ENCODE measurements at regions of chr18 and their contacts with region 1.

Region 1: GRCh38 chr18:57561728-57562423 is 24.6 kb downstream of the FECH start:
- H3K4me3 ChIP-seq: no peak overlapping the region
- H3K27ac ChIP-seq: no peak overlapping the region
- H3K4me1 ChIP-seq: no peaks in the 10 kb centered on the region
- CTCF ChIP-seq: peak; percentile 62

Region 2: GRCh38 chr18:56702946-56703345 is 858.9 kb before region 1 on chr18:
- CTCF ChIA-PET with region 1: interaction called, 17 read pairs
- POLR2A ChIA-PET with region 1: no interaction called
- H3K4me3 ChIP-seq: no peak overlapping the region
- H3K27ac ChIP-seq: no peak overlapping the region
- H3K4me1 ChIP-seq: no peaks in the 10 kb centered on the region
- CTCF ChIP-seq: no peak

Region 3: DNA sequence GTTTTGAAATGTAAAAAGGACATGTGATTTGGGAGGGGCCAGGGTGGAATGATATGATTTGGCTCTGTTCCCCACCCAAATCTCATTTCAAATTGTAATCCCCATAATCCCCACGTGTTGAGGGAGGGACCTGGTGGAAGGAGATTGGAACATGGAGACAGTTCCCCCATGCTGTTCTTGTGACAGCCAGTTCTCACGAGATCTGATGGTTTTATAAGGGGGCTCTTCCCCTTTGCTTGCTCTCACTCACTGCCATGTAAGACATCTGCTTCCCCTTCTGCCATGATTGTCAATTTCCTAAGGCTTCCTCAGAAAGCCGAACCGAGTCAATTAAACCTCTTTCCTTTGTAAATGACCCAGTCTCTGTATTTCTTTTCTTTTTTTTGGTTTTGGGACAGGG is 14.6 kb before region 1 on chr18:
- CTCF ChIA-PET with region 1: interaction called, 12 read pairs
- POLR2A ChIA-PET with region 1: interaction called, 3 read pairs
- H3K4me3 ChIP-seq: no peak overlapping the region
- H3K27ac ChIP-seq: no peak overlapping the region
- H3K4me1 ChIP-seq: no peaks in the 10 kb centered on the region
- CTCF ChIP-seq: no peak